ENCODE measurements at regions of chr20 and their contacts with region 1.

Region 1: DNA sequence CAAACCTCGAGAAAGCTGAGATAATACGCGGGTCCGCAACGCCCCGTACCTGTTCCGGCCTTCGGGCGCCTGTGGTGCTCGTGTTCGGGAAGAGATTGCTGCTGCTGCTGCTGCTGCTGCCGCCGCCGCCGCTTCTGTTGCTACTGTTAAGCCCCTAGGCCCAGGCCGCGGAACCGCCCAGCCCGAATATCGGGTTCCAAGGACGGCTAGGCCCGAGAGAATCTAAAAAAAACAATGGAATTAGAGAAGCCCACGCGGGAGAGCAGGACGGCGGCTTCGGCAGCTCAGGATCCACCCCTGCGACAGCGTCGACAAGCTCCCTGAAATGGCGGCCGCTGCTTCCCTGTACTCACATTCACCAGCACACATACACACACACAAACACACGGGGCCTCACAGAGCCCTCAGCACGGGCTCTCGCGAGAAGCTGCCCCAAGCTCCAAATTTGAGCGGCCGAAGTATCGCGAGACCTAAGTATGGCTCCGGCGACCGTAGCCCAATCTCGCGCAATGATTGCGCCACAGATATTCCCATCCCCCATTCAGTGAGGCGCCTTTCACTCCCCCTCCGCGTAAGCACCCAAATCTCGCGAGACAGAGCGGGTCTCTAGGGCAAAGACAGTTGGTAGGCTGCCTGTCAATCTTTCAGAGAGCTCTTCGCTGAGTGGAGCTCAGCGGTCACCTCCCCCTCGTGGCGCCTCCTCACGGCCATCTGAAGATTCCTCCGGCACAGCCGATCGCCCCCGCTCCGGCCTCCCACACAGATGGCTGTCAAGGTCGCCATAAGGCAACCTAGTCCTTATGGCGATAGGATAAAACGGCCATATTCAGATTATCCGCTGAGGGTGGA is at the start of gene RBM39:
- DNase-seq: peak; percentile 93 to 100 (median 100)
- ATAC-seq: peak; percentile 81 to 85
- H3K4me3 Mint-ChIP-seq: peak within 1 kb of the TSS; percentile 93 to 100 (median 99)
- H3K27ac Mint-ChIP-seq: peak within 1 kb of the TSS; percentile 98 to 100 (median 100)
- H3K4me1 Mint-ChIP-seq: peaks cover 27 to 57% (median 50%) of the 10 kb centered on the region in 4 donors
- H3K27me3 Mint-ChIP-seq: no peaks in the 10 kb centered on the region
- polyA plus RNA-seq, gene RBM39: 110 to 134 (median 112) TPM

Region 2: DNA sequence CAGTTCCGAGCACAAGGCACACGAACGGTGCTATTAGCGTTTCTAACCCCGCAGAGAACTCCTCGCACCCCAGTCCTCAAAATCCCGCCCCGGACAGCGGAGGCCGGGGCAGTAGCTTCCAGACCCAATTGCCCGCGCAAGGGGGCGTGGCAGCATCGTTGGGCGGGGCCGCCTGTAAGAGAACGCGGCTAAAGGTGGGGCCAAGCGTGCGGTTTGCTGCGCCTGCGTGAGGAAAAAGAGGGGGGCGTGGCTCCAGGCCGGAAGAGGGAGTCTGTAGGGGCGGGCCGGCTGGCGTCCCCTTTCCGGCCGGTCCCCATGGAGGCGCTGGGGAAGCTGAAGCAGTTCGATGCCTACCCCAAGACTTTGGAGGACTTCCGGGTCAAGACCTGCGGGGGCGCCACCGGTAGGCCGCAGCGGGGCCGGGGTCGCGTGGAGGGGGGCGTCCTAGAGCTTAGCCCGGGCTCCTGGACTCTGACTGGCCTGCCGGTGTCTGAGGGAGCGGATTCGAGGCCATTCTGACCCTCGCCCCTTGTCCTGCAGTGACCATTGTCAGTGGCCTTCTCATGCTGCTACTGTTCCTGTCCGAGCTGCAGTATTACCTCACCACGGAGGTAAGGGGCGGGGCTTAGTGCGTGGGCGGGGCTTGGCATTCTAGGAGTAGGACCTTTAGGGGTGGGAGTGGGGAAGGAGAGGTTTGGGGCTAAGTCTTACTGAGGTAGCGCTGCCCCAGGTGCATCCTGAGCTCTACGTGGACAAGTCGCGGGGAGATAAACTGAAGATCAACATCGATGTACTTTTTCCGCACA is 200.1 kb before region 1 on chr20 and contains the start of gene ERGIC3:
- POLR2A ChIA-PET with region 1: interaction called, 12 read pairs
- DNase-seq: peak; percentile 92 to 98 (median 96)
- ATAC-seq: peak; percentile 96
- H3K4me3 Mint-ChIP-seq: peak within 1 kb of the TSS; percentile 82 to 97 (median 92)
- H3K27ac Mint-ChIP-seq: peak within 1 kb of the TSS; percentile 70 to 96 (median 91)
- H3K4me1 Mint-ChIP-seq: peaks cover 10 to 28% (median 24%) of the 10 kb centered on the region in 4 donors
- H3K27me3 Mint-ChIP-seq: peaks cover 0 to 2% (median 0%) of the 10 kb centered on the region in 5 donors
- polyA plus RNA-seq, gene ERGIC3: 129 to 150 (median 149) TPM

Region 3: GRCh38 chr20:35652641-35653429 is 89.3 kb before region 1 on chr20:
- POLR2A ChIA-PET with region 1: no interaction called
- DNase-seq: no peak
- ATAC-seq: no peak
- H3K4me3 Mint-ChIP-seq: no peak overlapping the region
- H3K27ac Mint-ChIP-seq: peak overlapping the region in 1 of 10 donors; percentile 44
- H3K4me1 Mint-ChIP-seq: peaks cover 21 to 58% (median 48%) of the 10 kb centered on the region in 4 donors
- H3K27me3 Mint-ChIP-seq: no peaks in the 10 kb centered on the region

Region 4: GRCh38 chr20:35699127-35699975 is 42.8 kb before region 1 on chr20 and contains the starts of genes NFS1 and ROMO1:
- POLR2A ChIA-PET with region 1: interaction called, 71 read pairs
- DNase-seq: peak; percentile 73 to 92 (median 86)
- ATAC-seq: peak; percentile 83 to 92
- H3K4me3 Mint-ChIP-seq: peak within 1 kb of the TSS; percentile 85 to 98 (median 94)
- H3K27ac Mint-ChIP-seq: peak within 1 kb of the TSS; percentile 93 to 99 (median 97)
- H3K4me1 Mint-ChIP-seq: peaks cover 23 to 47% (median 38%) of the 10 kb centered on the region in 4 donors
- H3K27me3 Mint-ChIP-seq: no peaks in the 10 kb centered on the region
- polyA plus RNA-seq, gene NFS1: 8.6 to 16.6 (median 14.1) TPM
- polyA plus RNA-seq, gene ROMO1: 305 to 421 (median 381) TPM

Region 5: GRCh38 chr20:35771689-35772562 is 29.8 kb after region 1 on chr20 and contains the start of gene PHF20:
- POLR2A ChIA-PET with region 1: interaction called, 684 read pairs
- DNase-seq: peak; percentile 99 to 100 (median 100)
- ATAC-seq: peak; percentile 81 to 87
- H3K4me3 Mint-ChIP-seq: peak within 1 kb of the TSS; percentile 84 to 98 (median 93)
- H3K27ac Mint-ChIP-seq: peak within 1 kb of the TSS; percentile 98 to 100 (median 100)
- H3K4me1 Mint-ChIP-seq: peaks cover 45 to 91% (median 75%) of the 10 kb centered on the region in 4 donors
- H3K27me3 Mint-ChIP-seq: no peaks in the 10 kb centered on the region
- polyA plus RNA-seq, gene PHF20: 114 to 135 (median 125) TPM

Region 6: DNA sequence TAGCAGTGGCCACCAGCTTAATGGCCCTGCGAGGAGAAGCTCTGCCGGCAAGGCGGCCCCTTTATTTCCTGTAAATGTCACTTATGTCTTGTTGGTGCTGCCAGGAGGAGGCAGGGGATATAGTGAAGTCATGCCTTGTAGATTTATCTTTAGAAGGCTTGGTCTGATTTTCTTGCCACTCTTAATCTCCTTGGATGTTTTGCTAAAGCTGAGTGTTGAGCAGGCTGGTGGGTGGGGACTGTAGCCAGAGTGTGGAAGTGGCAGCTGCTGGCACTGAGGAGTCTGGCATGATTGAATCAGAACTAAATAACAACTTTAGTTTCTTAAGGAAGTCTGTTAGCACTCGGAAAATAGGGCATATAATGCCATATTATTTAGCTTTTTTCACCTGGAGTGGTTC is 107.6 kb after region 1 on chr20:
- POLR2A ChIA-PET with region 1: interaction called, 10 read pairs
- DNase-seq: no peak
- ATAC-seq: no peak
- H3K4me3 Mint-ChIP-seq: no peak overlapping the region
- H3K27ac Mint-ChIP-seq: peak overlapping the region; percentile 45 to 80 (median 74)
- H3K4me1 Mint-ChIP-seq: peaks cover 19 to 33% (median 26%) of the 10 kb centered on the region in 4 donors
- H3K27me3 Mint-ChIP-seq: no peaks in the 10 kb centered on the region

Measured in naive thymus-derived CD8-positive, alpha-beta T cell (primary cell).